GM12878 (cell line): ENCODE measurements at regions of chr7 and their contacts with region 1.

Region 1: DNA sequence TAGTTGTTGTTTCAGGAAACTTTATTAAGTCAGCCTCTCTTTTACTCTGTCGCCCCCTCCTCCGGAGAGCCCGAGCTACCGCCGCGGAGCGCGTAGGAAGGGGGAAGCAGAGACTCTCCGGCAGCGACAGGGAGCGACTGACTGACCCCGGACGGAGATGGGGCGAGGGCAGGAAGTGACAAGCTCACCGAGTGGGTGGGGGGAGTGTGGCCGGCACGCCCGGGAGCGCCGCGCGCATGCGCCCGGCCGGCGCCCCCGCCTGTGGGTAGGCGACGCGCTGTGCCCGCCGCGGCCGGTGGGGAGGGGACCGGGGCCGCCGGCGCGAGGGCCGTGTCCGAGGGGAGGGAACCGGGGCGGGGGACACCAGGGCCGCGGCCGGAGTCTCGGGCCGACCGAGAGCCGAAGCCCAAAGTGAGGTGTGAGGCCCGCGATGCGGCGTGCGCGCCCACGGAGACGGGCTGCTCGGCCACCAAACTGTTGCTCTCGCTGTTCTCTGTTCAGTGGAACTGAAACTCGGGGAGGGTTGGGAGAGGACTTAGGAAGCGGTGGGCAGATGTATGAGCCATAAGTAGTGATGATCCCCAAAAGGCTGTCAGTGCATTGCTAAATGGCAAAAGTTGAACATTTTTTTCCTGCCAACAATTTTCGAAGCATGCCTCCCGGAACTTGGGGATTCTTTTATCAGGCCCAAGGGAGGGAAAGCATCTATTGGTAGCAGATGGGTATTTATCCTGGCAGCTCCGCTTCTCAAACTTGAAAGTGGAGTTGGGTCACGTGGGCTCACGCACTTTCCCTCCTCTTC is at the start of gene ZNF800:
- DNase-seq: no peak
- ATAC-seq: peak; percentile 86
- H3K4me3 ChIP-seq: peak within 1 kb of the TSS; percentile 83
- H3K27ac ChIP-seq: peak within 1 kb of the TSS; percentile 97
- H3K4me1 ChIP-seq: peaks cover 7% of the 10 kb centered on the region; the same call in 1 of the 2 replicates
- H3K27me3 ChIP-seq: no peaks in the 10 kb centered on the region
- CTCF ChIP-seq: no peak
- EP300 ChIP-seq: no peak
- POLR2A ChIP-seq: peak; percentile 90
- RAD21 ChIP-seq: no peak
- polyA plus RNA-seq, gene ZNF800: 6.8 to 7.4 TPM

Region 2: GRCh38 chr7:127377425-127377824 is 15.3 kb before region 1 on chr7:
- CTCF ChIA-PET with region 1: interaction called, 10 read pairs
- POLR2A ChIA-PET with region 1: interaction called, 15 read pairs
- RAD21 ChIA-PET with region 1: no interaction called
- SMC1A ChIA-PET with region 1: interaction called, 3 read pairs
- in situ Hi-C with region 1: no loop called
- intact Hi-C with region 1: no loop called
- DNase-seq: no peak
- ATAC-seq: no peak
- H3K4me3 ChIP-seq: no peak overlapping the region
- H3K27ac ChIP-seq: no peak overlapping the region
- H3K4me1 ChIP-seq: no peaks in the 10 kb centered on the region
- H3K27me3 ChIP-seq: no peaks in the 10 kb centered on the region
- CTCF ChIP-seq: no peak
- EP300 ChIP-seq: no peak
- POLR2A ChIP-seq: no peak
- RAD21 ChIP-seq: no peak

Region 3: DNA sequence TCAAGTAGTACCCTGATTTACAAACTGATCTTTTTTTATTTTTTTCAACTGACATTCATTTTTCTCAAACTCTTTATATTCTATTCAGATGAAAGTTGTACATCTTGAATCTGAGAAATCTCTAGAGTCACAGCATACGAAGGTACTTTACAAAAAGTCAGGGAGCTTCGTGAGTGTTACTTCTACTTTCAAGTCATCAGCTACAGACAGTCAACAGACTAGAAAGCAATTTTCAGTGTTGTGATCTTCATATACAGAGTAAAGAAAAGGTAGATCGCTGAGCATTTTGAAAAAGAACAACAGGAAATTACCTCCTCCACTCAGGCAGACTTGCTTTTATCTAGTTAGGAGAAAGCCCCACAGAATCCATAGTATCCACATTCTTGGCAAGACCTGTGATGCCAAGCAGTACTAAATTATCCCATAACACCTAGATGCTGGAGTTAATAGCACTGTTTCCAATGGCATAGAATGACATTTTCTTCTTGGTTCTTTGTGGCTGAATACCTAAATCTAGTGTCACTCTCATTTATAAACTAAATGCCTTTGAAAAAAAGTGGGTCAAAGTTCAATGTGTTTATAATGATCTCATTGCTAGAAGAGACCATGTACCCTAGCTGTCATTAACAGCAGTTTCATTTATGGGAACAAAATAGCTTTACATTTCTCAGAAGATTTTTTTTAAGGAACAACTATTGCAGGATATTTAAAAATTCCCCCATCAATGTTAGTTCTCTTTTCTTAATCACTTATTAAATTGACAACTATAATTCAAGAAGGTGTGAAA is 11.7 kb after region 1 on chr7:
- CTCF ChIA-PET with region 1: interaction called, 6 read pairs
- POLR2A ChIA-PET with region 1: interaction called, 28 read pairs
- RAD21 ChIA-PET with region 1: interaction called, 13 read pairs
- SMC1A ChIA-PET with region 1: interaction called, 13 read pairs
- in situ Hi-C with region 1: no loop called
- intact Hi-C with region 1: no loop called
- DNase-seq: no peak
- ATAC-seq: peak; percentile 93
- H3K4me3 ChIP-seq: no peak overlapping the region
- H3K27ac ChIP-seq: no peak overlapping the region
- H3K4me1 ChIP-seq: peaks cover 3% of the 10 kb centered on the region; the same call in 1 of the 2 replicates
- H3K27me3 ChIP-seq: peaks cover 0 to under 1% of the 10 kb centered on the region in 2 experiments; a peak in 2 of 4 replicates
- CTCF ChIP-seq: no peak
- EP300 ChIP-seq: no peak; a peak in 1 of 4 replicates
- POLR2A ChIP-seq: no peak
- RAD21 ChIP-seq: no peak